Cardiac septum (tissue), 1 donor: ENCODE measurements at regions of chr16 and their contacts with region 1.

Region 1: GRCh38 chr16:56608043-56608875 is at the start of gene MT2A:
- DNase-seq: peak; percentile 97
- total RNA-seq, gene MT2A: 108 TPM

Region 2: DNA sequence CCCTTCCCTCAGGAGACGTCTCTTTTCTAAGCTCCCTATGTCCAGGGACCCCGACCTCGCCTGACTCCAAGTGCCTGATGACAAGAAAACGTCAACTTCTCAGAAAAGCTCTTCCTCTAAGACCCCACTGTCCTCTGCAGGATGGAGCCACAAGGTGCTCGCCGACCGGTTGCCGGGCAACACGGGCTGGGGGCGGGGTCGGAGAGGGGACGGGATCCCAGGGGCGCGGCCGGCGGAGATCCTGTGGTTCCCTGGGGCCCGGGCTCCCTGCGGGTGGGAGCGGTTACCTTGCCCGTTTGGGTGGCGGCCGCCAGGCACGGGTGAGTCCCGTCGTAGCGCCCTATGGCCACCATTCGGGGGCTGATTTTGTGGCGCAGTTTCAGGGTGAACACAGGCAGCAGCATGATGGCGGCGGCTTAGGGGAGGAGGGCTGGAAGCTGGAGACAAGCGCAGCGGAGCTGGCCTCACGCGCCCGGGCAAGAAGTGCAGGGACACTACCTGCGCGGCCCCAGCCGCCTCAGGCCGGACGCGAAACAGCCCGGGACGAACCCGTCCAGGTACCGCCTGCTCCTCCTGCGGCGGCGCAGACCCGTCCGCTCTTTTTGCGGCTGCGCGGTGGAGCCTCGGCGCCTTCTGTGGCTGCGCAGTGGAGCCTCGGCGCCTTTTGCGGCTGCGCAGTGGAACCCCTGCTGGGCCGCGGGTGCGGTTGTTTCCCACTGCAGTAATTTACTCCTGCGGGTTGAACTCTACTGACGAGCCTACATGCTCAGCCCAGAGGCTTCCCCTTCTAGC is 88.6 kb before region 1 on chr16 and contains the start of gene BBS2:
- intact Hi-C with region 1: loop called (anchors 5 kb)
- DNase-seq: peak; percentile 94
- total RNA-seq, gene BBS2: 43.7 TPM

Region 3: DNA sequence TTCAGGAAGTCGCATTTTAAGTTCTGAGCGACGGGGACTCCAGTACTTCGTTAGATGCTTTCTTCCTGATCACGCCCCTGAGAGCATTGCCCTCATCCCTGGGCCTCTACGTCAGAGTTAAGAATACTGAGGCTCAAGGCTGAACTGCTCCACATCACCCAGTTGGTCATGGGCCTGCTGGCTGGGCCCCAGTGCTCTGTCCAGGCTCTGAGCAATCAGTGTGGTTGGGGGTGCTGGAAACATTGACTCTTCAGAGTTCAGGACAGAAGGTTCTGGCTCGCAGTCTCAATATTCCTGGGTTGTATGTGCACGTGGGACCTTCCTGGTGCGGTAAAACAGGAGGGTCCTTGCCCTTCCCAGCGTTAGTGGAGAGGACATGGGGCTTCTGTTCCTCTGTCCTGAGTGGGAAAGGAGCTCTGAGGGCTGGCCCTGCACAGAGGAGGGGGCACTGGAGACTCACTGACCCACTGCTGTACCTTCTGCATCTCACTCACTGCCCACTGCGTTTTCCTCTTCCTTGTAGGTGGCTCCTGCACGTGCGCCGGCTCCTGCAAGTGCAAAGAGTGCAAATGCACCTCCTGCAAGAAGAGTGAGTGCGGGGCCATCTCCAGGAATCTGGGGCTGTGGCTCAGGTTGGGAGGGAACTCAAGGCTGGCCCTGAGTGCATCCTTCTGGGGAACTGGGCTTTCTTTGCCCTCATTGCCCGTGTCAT is 17.8 kb after region 1 on chr16:
- intact Hi-C with region 1: loop called (anchors 1 kb)
- DNase-seq: no peak

Region 4: GRCh38 chr16:56681939-56682702 is 73.9 kb after region 1 on chr16 and contains the start of gene MT1X:
- intact Hi-C with region 1: loop called (anchors 2 kb)
- DNase-seq: peak; percentile 95
- total RNA-seq, gene MT1X: 24.6 TPM